Activated T-helper 2 cell treated with anti-CD3 and anti-CD28 coated beads, Interferon-gamma antibody, Interleukin-2, Interleukin-4, amounts not matched to agents 10 μg/mL and 5 μg/mL and 100 μg/mL, durations not matched to agents 14 hours and 24 hours and 36 hours (primary cell): ENCODE measurements at regions of chr6 and their contacts with region 1.

Region 1: GRCh38 chr6:152982768-152983636 is at the start of gene FBXO5:
- DNase-seq: peak; percentile 97
- H3K4me3 Mint-ChIP-seq: peak within 1 kb of the TSS; percentile 97
- H3K27ac Mint-ChIP-seq: peak within 1 kb of the TSS; percentile 100
- H3K4me1 Mint-ChIP-seq: peaks cover 44% of the 10 kb centered on the region
- H3K27me3 Mint-ChIP-seq: no peaks in the 10 kb centered on the region
- total RNA-seq, gene FBXO5: 31.4 and 34.6 TPM in 2 replicates

Region 2: DNA sequence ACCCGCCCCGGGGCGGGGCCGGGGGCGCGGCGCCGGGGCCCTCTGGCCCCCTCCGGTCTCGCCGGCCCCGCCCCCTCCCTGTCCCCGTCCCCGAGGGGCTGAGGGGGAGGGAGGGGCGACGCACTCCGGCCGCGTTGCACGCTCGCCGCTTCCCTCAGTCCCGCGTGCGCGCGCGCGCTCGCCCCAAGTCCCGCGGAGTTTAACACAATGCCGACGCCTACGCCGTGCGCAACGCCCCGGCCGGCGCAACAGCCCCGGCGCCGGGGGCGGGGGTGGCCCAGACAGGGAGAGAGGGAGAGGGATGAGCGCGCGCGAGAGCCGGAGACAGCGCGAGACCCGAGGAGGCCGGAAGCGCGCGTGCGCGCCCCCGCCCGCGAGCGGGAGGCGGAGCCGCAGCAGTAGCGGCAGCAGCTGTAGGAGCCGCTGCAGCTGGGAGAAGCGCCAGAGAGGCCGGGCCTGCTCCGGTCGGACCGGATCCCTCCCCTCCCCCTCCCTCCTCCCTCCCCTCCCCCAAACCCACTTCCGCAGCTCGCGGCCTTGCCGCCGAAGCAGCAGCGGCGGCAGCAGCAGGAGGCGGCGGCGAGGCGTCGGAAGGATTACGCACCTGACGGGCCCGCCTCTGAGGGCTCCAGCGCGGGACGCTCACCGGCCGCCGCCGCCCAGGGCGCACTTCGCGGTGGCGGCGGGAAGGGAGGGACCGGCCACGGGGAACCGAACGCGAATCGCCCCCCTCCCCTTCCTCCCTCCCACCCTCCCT is 1592.5 kb before region 1 on chr6:
- intact Hi-C with region 1: loop called (anchors 2 kb)
- DNase-seq: peak; percentile 98
- H3K4me3 Mint-ChIP-seq: peak overlapping the region; percentile 49
- H3K27ac Mint-ChIP-seq: peak overlapping the region; percentile 55
- H3K4me1 Mint-ChIP-seq: peaks cover 48% of the 10 kb centered on the region
- H3K27me3 Mint-ChIP-seq: no peaks in the 10 kb centered on the region

Region 3: DNA sequence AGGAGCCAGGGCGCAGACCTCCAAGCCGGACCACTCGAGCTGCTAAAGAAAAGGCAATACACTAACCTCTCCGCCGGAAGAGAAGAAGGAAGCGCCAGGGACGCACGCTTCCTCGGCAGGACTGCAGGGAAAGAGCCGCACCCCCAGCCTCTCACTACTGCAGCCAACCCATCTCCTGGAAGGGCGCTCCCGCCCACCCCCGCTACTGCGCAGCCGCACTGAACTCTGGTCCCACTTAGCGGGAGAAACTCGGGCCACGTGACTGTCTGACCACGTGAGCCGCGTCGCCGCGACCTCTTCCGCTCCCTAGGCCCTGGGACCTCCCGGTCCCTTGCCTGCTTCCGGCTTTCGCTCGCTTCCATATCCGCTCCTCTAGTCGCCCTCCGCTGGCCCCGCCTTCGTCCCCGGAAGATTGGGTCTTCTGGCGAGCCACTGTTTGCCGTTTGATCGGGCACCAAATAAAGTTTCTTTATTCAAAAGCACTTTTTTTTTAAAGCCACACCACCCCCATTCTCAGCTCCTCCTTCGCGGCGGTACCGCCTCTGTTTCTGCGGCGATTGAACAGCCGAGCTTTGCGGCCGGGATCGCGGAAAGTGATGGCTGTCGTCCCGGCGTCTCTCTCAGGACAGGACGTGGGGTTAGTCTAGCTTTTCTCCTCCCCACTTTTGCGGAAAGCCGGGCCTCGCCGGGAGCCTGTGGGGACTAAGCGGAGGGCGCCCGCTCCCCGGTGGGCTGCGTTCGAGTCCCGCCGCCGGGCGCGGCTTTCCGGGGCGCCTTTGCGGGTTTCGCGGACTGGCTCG is 1530.9 kb before region 1 on chr6 and contains the start of gene RMND1:
- intact Hi-C with region 1: loop called (anchors 2 kb)
- DNase-seq: peak; percentile 99
- H3K4me3 Mint-ChIP-seq: peak within 1 kb of the TSS; percentile 97
- H3K27ac Mint-ChIP-seq: peak within 1 kb of the TSS; percentile 82
- H3K4me1 Mint-ChIP-seq: peaks cover 27% of the 10 kb centered on the region
- H3K27me3 Mint-ChIP-seq: no peaks in the 10 kb centered on the region
- total RNA-seq, gene RMND1: 18.5 and 20.5 TPM in 2 replicates

Region 4: GRCh38 chr6:152301764-152302568 is 681.0 kb before region 1 on chr6:
- intact Hi-C with region 1: loop called (anchors 2 kb)
- DNase-seq: peak; percentile 86
- H3K4me3 Mint-ChIP-seq: peak overlapping the region; percentile 99
- H3K27ac Mint-ChIP-seq: peak overlapping the region; percentile 99
- H3K4me1 Mint-ChIP-seq: peaks cover 22% of the 10 kb centered on the region
- H3K27me3 Mint-ChIP-seq: no peaks in the 10 kb centered on the region

Region 5: DNA sequence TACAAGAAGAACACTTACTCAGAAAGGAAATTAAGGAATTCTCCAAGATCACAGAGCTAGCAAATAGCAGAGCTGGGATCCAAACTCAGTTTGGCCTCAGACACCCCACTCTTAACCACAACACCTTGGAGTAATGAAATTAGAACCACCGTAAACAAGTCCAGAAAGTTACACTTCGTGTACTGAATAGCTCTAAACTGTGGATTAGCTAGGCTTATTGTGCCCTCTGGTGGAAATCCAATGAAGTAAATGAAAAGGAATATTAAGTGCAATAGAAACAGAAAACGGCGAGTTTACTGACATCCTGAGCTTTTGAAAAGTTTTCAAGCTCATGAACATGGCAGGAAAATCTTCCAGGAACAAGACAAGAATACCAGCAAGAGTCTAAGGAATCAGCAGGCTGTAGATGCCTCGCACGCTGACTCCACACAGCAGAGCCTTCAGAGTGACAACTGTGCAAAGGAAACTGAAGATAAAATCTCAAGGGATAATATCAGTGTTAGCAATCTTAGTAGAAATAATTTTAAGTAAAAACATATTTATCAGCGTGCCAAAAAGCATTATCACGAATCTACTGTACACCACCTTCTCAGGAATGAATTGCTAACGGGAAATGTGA is 34.7 kb before region 1 on chr6:
- intact Hi-C with region 1: loop called (anchors 2 kb)
- DNase-seq: no peak
- H3K4me3 Mint-ChIP-seq: no peak overlapping the region
- H3K27ac Mint-ChIP-seq: no peak overlapping the region
- H3K4me1 Mint-ChIP-seq: peaks cover 15% of the 10 kb centered on the region
- H3K27me3 Mint-ChIP-seq: peaks cover 15% of the 10 kb centered on the region

Region 6: DNA sequence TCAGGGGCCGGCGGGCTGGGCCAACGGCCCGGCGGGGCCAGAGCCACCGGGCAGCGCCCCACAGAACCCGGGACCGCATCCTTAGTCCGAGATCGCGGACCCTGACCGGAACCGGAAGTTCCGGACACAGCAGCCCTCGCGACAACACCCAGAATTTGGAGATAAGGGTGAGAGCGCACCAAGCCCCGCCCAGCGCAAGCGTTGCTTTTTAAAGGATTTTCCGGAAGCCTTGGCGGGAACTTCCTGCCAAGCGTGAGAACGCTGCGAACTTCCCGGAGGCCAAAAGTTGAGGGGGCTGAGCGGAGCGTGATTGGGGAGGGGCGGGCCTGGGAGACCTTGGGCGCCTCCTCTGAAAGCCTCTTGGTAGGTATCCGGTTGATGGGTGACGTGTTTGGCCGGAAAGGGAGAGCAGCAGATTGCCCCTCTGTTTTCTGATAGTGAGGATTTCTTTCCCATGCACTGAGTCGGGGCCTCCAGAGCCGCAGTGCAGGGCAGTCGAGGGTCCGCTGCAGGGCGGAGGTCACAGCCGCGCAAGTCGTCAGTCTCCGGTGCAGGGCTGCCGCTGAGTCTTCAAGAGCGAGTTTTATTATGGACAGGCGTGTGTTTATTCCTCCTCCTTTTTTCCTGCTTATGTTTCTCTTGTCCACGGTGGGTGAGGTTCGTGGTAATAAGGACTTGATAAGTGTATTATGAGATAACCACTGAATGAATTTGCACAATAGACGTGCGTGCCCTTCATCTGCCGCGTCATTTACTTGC is 19.8 kb after region 1 on chr6 and contains the start of gene MTRF1L:
- intact Hi-C with region 1: loop called (anchors 1 kb)
- DNase-seq: peak; percentile 83
- H3K4me3 Mint-ChIP-seq: peak within 1 kb of the TSS; percentile 99
- H3K27ac Mint-ChIP-seq: peak within 1 kb of the TSS; percentile 91
- H3K4me1 Mint-ChIP-seq: peaks cover 34% of the 10 kb centered on the region
- H3K27me3 Mint-ChIP-seq: peaks cover 11% of the 10 kb centered on the region
- total RNA-seq, gene MTRF1L: 24.1 and 24.9 TPM in 2 replicates

Region 7: GRCh38 chr6:153023977-153024708 is 41.1 kb after region 1 on chr6:
- intact Hi-C with region 1: loop called (anchors 2 kb)
- DNase-seq: peak; percentile 32
- H3K4me3 Mint-ChIP-seq: no peak overlapping the region
- H3K27ac Mint-ChIP-seq: no peak overlapping the region
- H3K4me1 Mint-ChIP-seq: peaks cover 4% of the 10 kb centered on the region
- H3K27me3 Mint-ChIP-seq: peaks cover 27% of the 10 kb centered on the region

Region 8: GRCh38 chr6:153301602-153302001 is 318.6 kb after region 1 on chr6:
- intact Hi-C with region 1: no loop called
- DNase-seq: no peak
- H3K4me3 Mint-ChIP-seq: no peak overlapping the region
- H3K27ac Mint-ChIP-seq: no peak overlapping the region
- H3K4me1 Mint-ChIP-seq: no peaks in the 10 kb centered on the region
- H3K27me3 Mint-ChIP-seq: no peaks in the 10 kb centered on the region

Region 9: DNA sequence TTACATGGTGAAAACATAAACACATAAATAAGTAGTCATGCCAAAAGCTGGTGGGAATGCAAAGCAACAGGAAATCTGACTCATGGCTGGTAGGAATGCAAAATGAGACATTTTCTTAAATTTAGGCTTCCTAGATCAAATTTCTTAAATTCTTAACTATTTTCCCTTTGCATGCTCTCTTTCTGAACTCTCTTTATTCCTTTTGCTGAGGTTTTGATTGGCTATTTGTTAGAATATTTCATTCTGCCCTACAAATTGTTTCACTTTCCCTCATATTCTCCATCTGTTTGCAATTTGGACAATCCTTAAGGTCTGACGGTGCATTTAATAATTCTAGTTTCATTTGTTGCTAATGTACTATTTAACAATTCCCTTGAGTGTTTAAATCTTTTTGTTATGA is 585.6 kb after region 1 on chr6:
- intact Hi-C with region 1: no loop called
- DNase-seq: no peak
- H3K4me3 Mint-ChIP-seq: no peak overlapping the region
- H3K27ac Mint-ChIP-seq: no peak overlapping the region
- H3K4me1 Mint-ChIP-seq: no peaks in the 10 kb centered on the region
- H3K27me3 Mint-ChIP-seq: no peaks in the 10 kb centered on the region